Caco-2 (cell line): ENCODE measurements at regions of chr3 and their contacts with region 1.

Region 1: DNA sequence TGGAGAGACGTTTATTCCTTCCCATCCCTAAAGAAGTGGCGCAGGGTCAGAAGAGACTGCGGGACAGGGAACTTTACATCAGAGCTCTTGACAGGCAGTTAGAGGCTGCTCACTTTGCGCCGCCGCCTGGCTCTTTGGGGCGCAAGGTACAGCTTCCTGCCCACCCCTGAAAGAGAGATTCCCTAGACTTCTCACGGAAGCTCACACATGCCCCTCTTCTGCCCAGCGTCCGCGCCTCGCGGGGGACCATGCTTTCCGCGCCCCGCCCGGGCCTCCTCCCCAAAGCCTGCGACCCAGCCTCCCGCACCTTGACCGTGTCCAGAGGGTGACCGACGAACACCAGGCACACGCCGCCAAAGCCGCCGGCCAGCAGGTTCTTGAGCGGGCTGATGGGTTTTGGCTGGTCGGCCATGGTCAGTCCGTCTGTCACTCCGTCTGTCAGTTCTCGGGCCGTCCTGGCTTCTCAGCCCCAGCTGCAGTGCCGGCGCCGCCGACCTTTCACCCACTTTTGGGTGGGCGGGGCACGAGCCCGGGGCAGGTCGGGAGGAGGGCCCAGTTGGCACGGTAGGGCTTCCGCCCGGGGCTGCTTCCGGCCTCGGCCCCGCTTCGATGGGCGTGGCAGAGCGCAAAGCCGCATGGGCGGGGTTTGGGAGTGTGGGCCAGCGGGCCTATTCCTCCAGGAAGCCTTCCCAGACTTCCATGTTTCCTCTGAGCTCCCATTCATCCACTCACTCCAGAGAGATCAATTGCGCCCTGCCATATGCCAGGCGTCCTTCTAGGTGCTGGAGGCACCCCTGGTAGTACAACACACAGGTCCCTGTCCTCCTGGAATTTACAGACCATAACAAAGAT is at the start of gene SLC25A20:
- DNase-seq: peak; percentile 91 to 95
- H3K4me3 ChIP-seq: peak within 1 kb of the TSS; percentile 66
- H3K4me3 Mint-ChIP-seq: peak within 1 kb of the TSS; percentile 92
- H3K27ac Mint-ChIP-seq: peak within 1 kb of the TSS; percentile 46
- H3K4me1 ChIP-seq: peaks cover 17% of the 10 kb centered on the region
- H3K4me1 Mint-ChIP-seq: peaks cover 24% of the 10 kb centered on the region
- H3K27me3 ChIP-seq: no peaks in the 10 kb centered on the region
- H3K27me3 Mint-ChIP-seq: no peaks in the 10 kb centered on the region
- CTCF ChIP-seq: no peak
- total RNA-seq, gene SLC25A20: 17.0 and 19.3 TPM in 2 replicates

Region 2: GRCh38 chr3:48776854-48777253 is 121.8 kb before region 1 on chr3:
- CTCF ChIA-PET with region 1: no interaction called
- POLR2A ChIA-PET with region 1: interaction called, 15 read pairs
- intact Hi-C with region 1: no loop called
- DNase-seq: no peak
- H3K4me3 ChIP-seq: no peak overlapping the region
- H3K4me3 Mint-ChIP-seq: no peak overlapping the region
- H3K27ac Mint-ChIP-seq: no peak overlapping the region
- H3K4me1 ChIP-seq: no peaks in the 10 kb centered on the region
- H3K4me1 Mint-ChIP-seq: no peaks in the 10 kb centered on the region
- H3K27me3 ChIP-seq: no peaks in the 10 kb centered on the region
- H3K27me3 Mint-ChIP-seq: no peaks in the 10 kb centered on the region
- CTCF ChIP-seq: no peak

Region 3: GRCh38 chr3:48835650-48836366 is 62.8 kb before region 1 on chr3:
- CTCF ChIA-PET with region 1: no interaction called
- POLR2A ChIA-PET with region 1: no interaction called
- intact Hi-C with region 1: no loop called
- DNase-seq: no peak
- H3K4me3 ChIP-seq: no peak overlapping the region
- H3K4me3 Mint-ChIP-seq: no peak overlapping the region
- H3K27ac Mint-ChIP-seq: no peak overlapping the region
- H3K4me1 ChIP-seq: no peaks in the 10 kb centered on the region
- H3K4me1 Mint-ChIP-seq: no peaks in the 10 kb centered on the region
- H3K27me3 ChIP-seq: no peaks in the 10 kb centered on the region
- H3K27me3 Mint-ChIP-seq: no peaks in the 10 kb centered on the region
- CTCF ChIP-seq: no peak

Region 4: DNA sequence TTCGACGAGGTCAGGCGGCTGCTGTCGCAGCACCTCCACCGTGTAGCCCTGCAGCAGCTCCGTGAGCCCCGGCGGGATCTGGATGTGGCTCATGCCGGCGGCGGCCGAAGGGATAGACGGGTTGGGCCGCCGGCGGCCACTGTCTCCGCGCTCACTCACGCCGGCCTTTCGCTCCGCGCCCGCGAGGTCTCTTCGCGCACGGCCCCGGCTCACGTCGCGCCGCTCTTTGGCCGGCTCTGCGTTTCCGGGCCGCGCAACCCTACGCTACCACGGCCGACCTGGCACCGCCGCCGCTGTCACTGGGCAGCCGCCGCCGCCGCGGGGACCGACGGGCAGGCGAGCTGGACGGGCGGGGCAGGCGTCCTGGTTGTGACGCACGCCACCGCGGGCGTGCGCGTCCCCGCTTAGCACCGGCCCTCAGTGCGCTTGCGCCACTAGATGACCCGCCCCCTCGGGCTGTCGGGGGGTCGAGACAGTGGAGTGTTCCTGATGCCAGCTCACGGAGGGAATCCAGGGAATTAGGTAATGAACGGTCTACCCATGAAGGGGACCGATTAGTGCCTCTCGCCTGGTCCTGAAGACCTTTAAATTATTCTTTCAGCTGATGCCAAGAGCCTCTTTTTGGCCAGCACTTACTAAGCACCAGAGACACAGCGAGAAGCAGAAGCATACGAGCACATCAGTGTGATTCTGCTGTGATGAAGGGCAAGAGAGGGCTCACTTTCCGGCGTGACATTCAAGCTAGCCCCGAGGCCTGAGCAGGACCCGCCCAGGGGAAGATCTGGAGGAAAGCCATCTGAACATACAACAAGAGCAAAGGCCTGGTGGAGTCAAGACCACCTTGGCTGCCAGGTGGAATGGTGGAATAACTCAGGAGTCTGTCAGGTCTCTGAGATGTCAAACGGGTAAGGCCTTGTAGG is 50.8 kb before region 1 on chr3 and contains the start of gene PRKAR2A:
- CTCF ChIA-PET with region 1: no interaction called
- POLR2A ChIA-PET with region 1: interaction called, 5 read pairs
- intact Hi-C with region 1: loop called (anchors 1 kb)
- DNase-seq: peak; percentile 78 to 89
- H3K4me3 ChIP-seq: peak within 1 kb of the TSS; percentile 72
- H3K4me3 Mint-ChIP-seq: peak within 1 kb of the TSS; percentile 92
- H3K27ac Mint-ChIP-seq: peak within 1 kb of the TSS; percentile 60
- H3K4me1 ChIP-seq: no peaks in the 10 kb centered on the region
- H3K4me1 Mint-ChIP-seq: no peaks in the 10 kb centered on the region
- H3K27me3 ChIP-seq: no peaks in the 10 kb centered on the region
- H3K27me3 Mint-ChIP-seq: no peaks in the 10 kb centered on the region
- CTCF ChIP-seq: no peak
- total RNA-seq, gene PRKAR2A: 56.3 and 67.3 TPM in 2 replicates

Region 5: GRCh38 chr3:48989796-48990635 is 91.4 kb after region 1 on chr3 and contains the start of gene P4HTM:
- CTCF ChIA-PET with region 1: no interaction called
- POLR2A ChIA-PET with region 1: no interaction called
- intact Hi-C with region 1: no loop called
- DNase-seq: peak; percentile 82 to 84
- H3K4me3 ChIP-seq: peak within 1 kb of the TSS; percentile 95
- H3K4me3 Mint-ChIP-seq: peak within 1 kb of the TSS; percentile 96
- H3K27ac Mint-ChIP-seq: peak within 1 kb of the TSS; percentile 98
- H3K4me1 ChIP-seq: peaks cover 13% of the 10 kb centered on the region
- H3K4me1 Mint-ChIP-seq: peaks cover 13% of the 10 kb centered on the region
- H3K27me3 ChIP-seq: no peaks in the 10 kb centered on the region
- H3K27me3 Mint-ChIP-seq: no peaks in the 10 kb centered on the region
- CTCF ChIP-seq: peak in 1 of 2 experiments; percentile 40
- total RNA-seq, gene P4HTM: 24.4 and 25.5 TPM in 2 replicates

Region 6: GRCh38 chr3:49007068-49007770 is 108.6 kb after region 1 on chr3 and contains the start of gene WDR6:
- CTCF ChIA-PET with region 1: no interaction called
- POLR2A ChIA-PET with region 1: no interaction called
- intact Hi-C with region 1: no loop called
- DNase-seq: peak; percentile 98
- H3K4me3 ChIP-seq: peak within 1 kb of the TSS; percentile 92
- H3K4me3 Mint-ChIP-seq: peak within 1 kb of the TSS; percentile 94
- H3K27ac Mint-ChIP-seq: peak within 1 kb of the TSS; percentile 98
- H3K4me1 ChIP-seq: peaks cover 26% of the 10 kb centered on the region
- H3K4me1 Mint-ChIP-seq: peaks cover 13% of the 10 kb centered on the region
- H3K27me3 ChIP-seq: no peaks in the 10 kb centered on the region
- H3K27me3 Mint-ChIP-seq: no peaks in the 10 kb centered on the region
- CTCF ChIP-seq: peak in 1 of 2 experiments; percentile 8
- total RNA-seq, gene WDR6: 184 and 185 TPM in 2 replicates